Mammary epithelial cell (primary cell): ENCODE measurements at regions of chr21 and their contacts with region 1.

Region 1: DNA sequence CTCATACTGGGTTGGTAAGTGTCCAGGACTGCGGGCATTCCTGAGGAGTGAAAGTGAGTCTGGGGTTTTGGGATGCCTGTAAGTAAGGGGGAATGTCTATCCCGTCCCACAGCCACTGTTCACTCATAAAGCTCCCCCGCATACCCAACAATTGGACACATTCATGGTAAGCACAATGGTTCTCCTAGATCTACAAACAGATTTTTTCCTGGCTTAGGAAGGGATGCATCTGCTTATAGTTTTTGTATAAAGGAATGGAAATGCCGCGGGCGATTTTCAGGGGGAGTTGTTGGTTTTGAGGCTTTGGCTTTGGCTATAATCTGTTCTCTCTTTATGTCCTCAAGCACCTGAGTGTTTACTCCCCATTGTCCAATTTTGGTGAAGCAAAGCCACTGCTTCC is 7.1 kb downstream of the ERVH48-1 start:
- DNase-seq: no peak
- H3K4me3 ChIP-seq: no peak overlapping the region
- H3K27ac ChIP-seq: no peak overlapping the region
- H3K4me1 ChIP-seq: no peaks in the 10 kb centered on the region
- H3K27me3 ChIP-seq: no peaks in the 10 kb centered on the region
- CTCF ChIP-seq: no peak

Region 2: DNA sequence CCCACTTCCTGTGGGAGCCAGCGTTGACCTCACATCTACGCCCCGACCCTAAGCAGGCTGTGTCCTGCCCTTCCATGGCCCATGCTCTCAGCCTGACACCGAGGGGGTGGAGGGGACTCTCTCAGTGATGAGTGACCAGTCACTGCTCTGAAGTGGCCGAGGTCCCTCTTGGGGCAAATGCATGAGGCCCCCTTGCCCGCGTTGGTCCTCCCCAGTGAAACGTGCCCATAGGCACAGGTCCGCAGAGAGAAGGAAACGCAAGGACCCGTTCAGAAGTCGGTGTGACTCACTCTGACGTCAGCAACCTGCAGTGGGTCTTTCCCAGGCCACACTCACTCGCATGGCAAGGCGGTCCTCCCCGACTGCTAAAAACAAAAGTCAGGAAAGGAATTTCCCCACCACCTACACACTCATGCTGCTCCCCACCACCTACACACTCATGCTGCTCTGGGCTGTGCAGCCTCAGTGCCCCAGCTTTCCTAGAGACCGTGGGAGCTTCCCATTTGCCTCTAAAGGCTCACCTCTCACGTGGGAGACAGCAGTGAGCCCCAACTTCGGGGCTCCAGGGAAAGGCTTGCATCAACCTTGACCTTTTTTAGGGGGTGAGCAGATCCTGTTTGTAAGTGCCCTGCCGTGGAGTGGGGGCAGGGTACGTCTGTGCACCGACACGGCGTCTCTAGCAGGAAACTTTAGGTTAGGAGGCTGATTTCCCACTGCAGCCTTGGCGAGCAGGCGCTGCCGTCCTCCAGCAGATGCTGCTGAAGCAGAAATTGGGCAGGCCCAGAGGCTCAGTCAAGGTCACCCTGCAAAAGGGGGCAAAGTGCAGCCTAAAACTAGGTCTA is 503.1 kb before region 1 on chr21:
- CTCF ChIA-PET with region 1: no interaction called
- dilution Hi-C with region 1: no loop called
- in situ Hi-C with region 1: no loop called
- intact Hi-C with region 1: loop called (anchors 5 kb)
- DNase-seq: peak; percentile 93
- H3K4me3 ChIP-seq: no peak overlapping the region
- H3K27ac ChIP-seq: no peak overlapping the region
- H3K4me1 ChIP-seq: peaks cover 12% of the 10 kb centered on the region
- H3K27me3 ChIP-seq: peaks cover 3% of the 10 kb centered on the region
- CTCF ChIP-seq: no peak

Region 3: DNA sequence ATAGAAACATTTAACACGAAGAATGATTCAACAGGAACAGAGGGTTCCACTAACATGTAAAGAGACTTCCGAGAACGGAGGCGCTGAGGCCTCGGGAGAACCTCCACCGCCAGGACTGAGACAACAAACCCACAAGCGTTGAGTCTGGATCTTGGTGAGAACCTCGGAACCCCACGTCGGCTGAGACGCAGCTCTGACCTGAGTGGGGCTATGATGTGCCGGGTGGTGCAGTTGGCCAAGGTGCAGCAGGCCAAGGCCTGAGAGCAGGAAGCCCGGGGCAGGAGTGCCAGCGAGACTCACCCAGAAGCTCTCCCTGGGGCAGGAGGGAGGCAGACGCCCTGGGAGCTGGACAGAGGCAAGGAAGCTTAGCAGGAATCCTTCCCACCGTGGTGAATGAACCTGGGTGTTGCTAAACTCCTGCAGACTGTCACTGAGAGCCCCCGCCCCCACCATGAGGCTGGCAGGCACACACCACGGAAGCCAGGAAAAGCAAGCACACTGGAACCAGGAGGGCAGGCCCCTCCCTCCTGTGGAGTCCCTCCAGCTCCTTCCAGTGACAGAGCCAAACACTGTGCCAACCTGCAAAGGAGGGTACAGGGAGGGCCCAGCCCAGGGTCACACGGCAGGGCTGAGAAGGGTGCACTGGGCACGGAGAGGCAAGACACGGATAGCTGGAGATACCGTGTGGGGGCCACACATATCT is 73.7 kb before region 1 on chr21:
- CTCF ChIA-PET with region 1: no interaction called
- dilution Hi-C with region 1: loop called (anchors 5 kb)
- in situ Hi-C with region 1: no loop called
- intact Hi-C with region 1: no loop called
- DNase-seq: no peak
- H3K4me3 ChIP-seq: no peak overlapping the region
- H3K27ac ChIP-seq: no peak overlapping the region
- H3K4me1 ChIP-seq: no peaks in the 10 kb centered on the region
- H3K27me3 ChIP-seq: no peaks in the 10 kb centered on the region
- CTCF ChIP-seq: no peak

Region 4: GRCh38 chr21:43611598-43612369 is 693.5 kb after region 1 on chr21:
- CTCF ChIA-PET with region 1: no interaction called
- dilution Hi-C with region 1: no loop called
- in situ Hi-C with region 1: no loop called
- intact Hi-C with region 1: no loop called
- DNase-seq: peak; percentile 57
- H3K4me3 ChIP-seq: no peak overlapping the region
- H3K27ac ChIP-seq: no peak overlapping the region
- H3K4me1 ChIP-seq: peaks cover 36% of the 10 kb centered on the region
- H3K27me3 ChIP-seq: no peaks in the 10 kb centered on the region
- CTCF ChIP-seq: peak; percentile 72 to 87